ENCODE measurements at regions of chr10 and their contacts with region 1.

Region 1: DNA sequence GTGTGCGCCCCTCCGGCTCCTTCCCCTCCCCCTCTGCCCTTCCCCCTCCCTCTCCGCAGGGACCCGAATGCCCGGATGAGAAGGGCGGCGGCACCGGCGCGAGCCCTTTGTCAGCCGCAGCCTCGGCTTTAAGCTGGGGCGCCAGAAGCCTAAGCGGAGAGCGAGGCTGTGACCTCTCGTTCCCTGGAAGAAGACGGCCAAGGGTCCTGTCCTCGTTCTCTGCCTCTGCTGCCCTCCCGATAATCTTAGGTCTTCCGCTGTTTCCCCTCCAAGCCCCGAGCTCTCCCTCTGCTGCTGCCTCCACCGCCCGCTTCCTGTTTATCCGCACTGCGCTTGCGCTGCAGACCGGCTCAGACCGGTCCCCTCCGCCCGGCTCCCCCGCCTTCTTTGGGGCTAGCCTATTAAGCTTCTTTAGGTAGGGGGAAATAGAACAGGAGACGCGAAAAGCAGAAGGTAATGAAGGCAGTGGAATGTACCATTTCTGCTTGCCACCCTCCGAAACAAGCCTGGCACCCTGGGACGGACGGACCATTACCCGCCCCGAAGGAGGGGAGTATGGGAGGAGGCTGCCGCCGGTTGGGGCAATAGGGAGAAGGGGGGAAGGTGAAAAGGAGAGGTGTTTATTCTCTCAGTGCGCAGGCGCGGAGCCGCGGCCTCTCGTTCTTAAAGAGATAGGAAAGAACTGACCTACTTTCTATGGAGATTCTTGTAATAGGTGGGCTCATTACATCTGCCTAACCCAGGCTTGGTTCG is at the start of gene OGA:
- DNase-seq: peak; percentile 97
- H3K4me3 Mint-ChIP-seq: peak within 1 kb of the TSS; percentile 100
- H3K27ac Mint-ChIP-seq: peak within 1 kb of the TSS; percentile 100
- H3K4me1 Mint-ChIP-seq: peaks cover 57% of the 10 kb centered on the region
- H3K27me3 Mint-ChIP-seq: peaks cover 3% of the 10 kb centered on the region
- total RNA-seq, gene OGA: 113 and 117 TPM in 2 replicates

Region 2: DNA sequence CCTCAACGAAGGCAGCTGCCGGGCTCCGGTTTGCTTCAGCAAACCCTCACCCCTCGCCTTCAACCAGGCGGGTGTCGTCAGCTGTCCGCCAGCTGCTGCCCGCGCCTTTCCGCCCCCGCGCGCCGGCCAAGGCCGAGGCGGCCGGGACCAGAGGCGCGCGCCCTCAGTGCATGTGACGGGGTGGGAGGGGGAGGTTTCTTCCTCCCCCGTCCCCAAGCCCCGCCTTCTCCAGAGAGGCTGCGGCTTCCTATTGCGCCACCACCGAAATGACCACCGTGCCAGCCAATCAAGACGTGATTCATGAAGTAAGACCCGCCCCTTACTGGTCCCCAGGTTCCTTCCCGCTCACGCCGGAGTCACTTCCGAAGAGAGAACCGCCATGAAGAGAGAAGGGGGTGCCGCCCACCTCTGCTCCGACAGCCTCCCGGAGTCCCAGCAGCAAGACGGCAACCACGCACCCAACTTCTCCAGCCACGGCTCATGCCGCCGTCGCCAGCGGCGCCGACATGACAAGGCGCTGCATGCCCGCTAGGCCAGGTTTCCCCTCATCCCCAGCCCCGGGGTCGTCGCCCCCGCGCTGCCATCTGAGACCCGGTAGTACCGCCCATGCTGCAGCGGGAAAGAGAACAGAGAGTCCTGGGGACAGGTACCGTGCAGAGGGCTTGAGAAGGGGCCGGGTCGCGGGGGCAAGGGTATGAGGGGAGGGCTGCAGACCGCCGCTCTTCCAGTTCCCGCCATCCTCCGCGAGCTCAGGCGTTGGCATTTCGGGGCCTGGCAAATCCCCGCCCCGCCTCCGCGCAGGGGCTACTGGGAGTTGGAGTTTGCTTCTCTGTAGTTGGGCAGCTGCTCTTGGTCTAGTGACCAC is 905.5 kb before region 1 on chr10 and contains the start of gene SLF2:
- intact Hi-C with region 1: loop called (anchors 5 kb)
- DNase-seq: peak; percentile 94
- H3K4me3 Mint-ChIP-seq: peak within 1 kb of the TSS; percentile 97
- H3K27ac Mint-ChIP-seq: peak within 1 kb of the TSS; percentile 95
- H3K4me1 Mint-ChIP-seq: peaks cover 48% of the 10 kb centered on the region
- H3K27me3 Mint-ChIP-seq: no peaks in the 10 kb centered on the region
- total RNA-seq, gene SLF2: 33.4 and 36.1 TPM in 2 replicates

Region 3: GRCh38 chr10:101704331-101704730 is 114.0 kb before region 1 on chr10:
- intact Hi-C with region 1: loop called (anchors 5 kb)
- DNase-seq: no peak
- H3K4me3 Mint-ChIP-seq: no peak overlapping the region
- H3K27ac Mint-ChIP-seq: no peak overlapping the region
- H3K4me1 Mint-ChIP-seq: peaks cover 51% of the 10 kb centered on the region
- H3K27me3 Mint-ChIP-seq: peaks cover 38% of the 10 kb centered on the region

Region 4: GRCh38 chr10:101830322-101831168 is 12.2 kb after region 1 on chr10:
- intact Hi-C with region 1: loop called (anchors 1 kb)
- DNase-seq: peak; percentile 85
- H3K4me3 Mint-ChIP-seq: peak overlapping the region; percentile 79
- H3K27ac Mint-ChIP-seq: peak overlapping the region; percentile 94
- H3K4me1 Mint-ChIP-seq: peaks cover 51% of the 10 kb centered on the region
- H3K27me3 Mint-ChIP-seq: no peaks in the 10 kb centered on the region

Region 5: DNA sequence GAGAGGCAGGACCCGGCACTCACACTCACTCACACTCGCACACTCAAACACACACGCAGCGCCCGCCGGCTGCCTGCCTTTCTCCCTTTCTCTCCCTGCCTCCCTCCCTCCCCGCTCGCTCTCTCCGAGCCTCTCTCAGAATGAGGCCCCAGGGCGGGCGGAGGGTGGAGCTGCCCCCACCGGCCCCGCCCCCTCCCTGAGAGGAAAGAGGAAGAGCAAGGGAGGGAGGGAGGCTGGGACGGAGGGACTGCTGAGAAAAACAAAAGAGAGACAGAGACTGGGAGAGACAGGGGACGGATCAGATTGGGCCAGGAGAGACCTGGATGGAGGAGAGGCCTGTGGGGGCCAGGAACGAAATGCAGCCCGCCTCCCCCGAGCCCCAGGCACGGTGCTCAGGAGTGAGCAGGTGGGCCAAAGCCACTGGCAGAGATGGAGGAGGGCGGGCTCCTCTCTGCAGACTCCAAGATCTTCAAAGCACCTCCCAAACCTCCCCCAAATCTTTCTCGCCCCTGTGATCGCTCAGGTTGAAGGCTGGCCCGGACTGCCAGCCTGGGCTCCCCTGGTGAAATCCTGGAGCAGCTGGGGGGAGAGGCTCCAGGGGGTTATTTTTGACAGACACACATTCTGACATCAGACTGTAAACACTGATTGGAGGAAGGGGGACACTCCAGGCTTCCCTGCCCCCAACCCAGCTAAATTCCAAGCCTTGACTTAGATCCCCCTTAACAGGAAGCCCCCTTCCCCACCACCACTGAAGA is 296.7 kb after region 1 on chr10:
- intact Hi-C with region 1: loop called (anchors 2 kb)
- DNase-seq: peak; percentile 73
- H3K4me3 Mint-ChIP-seq: peak overlapping the region; percentile 85
- H3K27ac Mint-ChIP-seq: peak overlapping the region; percentile 98
- H3K4me1 Mint-ChIP-seq: peaks cover 71% of the 10 kb centered on the region
- H3K27me3 Mint-ChIP-seq: no peaks in the 10 kb centered on the region

Region 6: DNA sequence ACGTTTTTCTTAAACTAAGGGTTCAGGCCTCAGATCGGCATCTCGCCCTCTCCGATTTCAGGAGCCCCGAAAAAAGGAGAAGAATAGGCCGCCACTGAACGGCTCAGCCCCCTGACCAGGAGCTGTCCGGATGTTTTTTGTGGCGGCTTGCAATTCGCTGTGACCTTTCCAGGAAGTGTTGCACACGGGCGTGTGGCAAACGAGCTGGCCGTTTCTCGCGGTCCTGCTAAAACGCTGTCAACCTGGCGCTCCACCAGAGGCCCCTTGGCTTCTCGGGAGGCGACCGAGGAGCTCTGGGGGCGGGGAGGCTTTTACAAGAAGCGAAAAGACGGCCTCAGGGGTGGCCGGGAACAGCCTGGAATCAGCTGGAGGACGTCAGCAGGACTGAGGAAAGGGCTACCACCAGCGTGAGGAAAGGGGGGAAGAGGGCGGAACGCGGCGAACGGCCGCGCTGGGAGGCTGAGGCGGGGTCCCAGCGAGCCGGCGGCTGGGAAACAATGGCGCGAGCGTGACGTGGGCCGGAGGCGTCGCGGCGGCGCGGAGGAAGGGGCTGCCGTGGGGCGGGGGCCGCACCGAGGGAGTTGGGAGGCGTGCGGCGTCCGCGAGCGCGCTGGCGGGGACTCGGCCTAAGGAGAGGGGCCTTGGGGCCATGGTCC is 1374.3 kb after region 1 on chr10:
- intact Hi-C with region 1: loop called (anchors 2 kb)
- DNase-seq: peak; percentile 64
- H3K4me3 Mint-ChIP-seq: peak overlapping the region; percentile 96
- H3K27ac Mint-ChIP-seq: peak overlapping the region; percentile 99
- H3K4me1 Mint-ChIP-seq: peaks cover 45% of the 10 kb centered on the region
- H3K27me3 Mint-ChIP-seq: no peaks in the 10 kb centered on the region

Measured in activated T-helper 1 cell treated with anti-CD3 and anti-CD28 coated beads, Interleukin-12 subunit alpha, Interleukin-12 subunit beta, Interleukin-2, Interleukin-4 antibody, amounts not matched to agents 30 ng/mL and 10 ng/mL and 1 ng/mL, durations not matched to agents 14 hours and 24 hours and 36 hours (primary cell).